ENCODE measurements at regions of chr3 and their contacts with region 1.

Region 1: GRCh38 chr3:158185711-158186110 is 75.8 kb downstream of the RSRC1 start:
- DNase-seq: no peak

Region 2: DNA sequence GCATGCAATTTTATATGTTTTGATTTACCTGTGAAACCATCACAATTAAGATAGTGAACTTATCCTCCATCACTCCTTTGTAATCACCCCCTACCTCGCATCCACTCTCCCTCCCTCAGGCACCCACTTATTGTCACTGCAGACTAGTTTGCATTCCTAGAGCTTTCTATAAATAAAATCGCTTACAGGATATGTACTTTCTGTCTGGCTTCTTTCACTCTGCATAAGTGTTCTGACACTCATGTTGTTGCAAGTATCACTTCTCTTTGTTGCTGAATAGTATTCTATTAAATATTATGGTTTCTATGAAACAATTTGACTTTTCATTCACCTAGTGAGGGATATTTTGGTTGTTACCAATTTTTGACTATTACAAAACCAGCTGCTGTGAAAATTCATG is 63.5 kb after region 1 on chr3:
- intact Hi-C with region 1: loop called in 1 of 2 experiments (anchors 2 kb)
- DNase-seq: no peak

Region 3: DNA sequence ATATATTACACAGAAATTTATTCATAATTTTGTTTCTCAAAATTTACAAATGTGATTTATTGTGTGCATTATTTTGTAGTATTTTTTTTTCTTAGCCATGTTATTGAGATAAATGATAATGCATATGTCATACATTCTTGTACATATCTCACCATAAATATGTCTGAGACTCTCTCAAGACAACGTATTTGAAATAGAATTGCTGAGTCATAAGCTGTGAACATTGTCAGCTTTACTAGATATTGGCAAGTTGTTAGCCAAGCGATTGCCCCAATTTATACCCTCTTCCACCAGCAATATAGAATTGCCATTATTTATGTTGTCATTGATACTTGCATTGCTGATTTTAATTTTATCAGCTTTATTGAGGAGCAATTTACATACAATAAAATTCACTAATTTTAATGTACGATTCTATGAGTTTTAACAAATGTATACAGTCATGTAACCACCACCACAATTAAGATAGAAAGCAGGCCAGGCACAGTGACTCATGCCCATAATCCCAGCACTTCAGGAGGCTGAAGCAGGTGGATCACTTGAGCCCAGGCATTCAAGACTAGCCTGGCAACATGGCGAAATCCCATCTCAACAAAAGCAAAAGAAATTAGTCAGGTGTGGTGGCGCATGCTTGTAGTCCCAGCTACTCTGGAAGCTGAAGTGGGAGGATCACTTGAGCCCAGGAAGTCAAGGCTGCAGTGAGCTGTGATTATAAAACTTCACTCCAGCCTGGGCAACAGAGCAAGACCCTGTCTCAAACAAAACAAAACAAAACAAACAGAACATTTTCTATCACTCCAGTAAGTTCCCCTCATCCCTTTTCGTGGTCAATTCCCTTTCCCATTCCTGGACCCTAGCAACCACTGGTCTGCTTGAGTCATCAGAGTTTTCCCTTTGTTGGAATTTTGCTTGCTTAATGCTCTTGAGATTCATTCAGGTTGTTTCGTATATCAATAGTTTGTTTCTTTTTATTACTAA is 989.3 kb after region 1 on chr3:
- intact Hi-C with region 1: no loop called
- DNase-seq: no peak

Measured in posterior vena cava (tissue), 2 donors.